Astrocyte of the cerebellum (primary cell): ENCODE measurements at regions of chr11 and their contacts with region 1.

Region 1: GRCh38 chr11:63592975-63593395 is 21.2 kb downstream of the PLAAT3 start:
- DNase-seq: no peak
- H3K4me3 ChIP-seq: no peak overlapping the region
- CTCF ChIP-seq: peak; percentile 71

Region 2: DNA sequence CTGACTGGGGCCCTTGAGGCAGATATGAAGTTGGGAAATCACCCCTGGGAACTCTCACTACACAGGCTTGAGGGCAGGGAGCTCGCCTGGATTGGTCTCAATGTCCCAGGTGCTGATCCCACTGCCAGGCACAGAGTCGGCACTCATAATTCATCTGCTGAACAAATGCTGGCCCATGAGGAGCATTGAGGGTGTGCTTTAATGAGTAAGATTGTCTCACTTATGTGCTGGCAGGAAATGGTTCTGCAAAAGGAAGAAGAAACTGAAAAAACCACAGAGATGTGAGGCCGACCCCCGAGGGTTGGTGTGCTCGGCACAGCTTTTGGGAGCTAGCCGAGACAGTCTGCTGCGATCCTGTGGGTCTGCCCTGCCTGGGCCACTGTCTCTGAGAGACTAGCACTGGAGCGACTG is 39.2 kb before region 1 on chr11:
- in situ Hi-C with region 1: loop called (anchors 5 kb)
- DNase-seq: no peak
- H3K4me3 ChIP-seq: no peak overlapping the region
- CTCF ChIP-seq: no peak

Region 3: DNA sequence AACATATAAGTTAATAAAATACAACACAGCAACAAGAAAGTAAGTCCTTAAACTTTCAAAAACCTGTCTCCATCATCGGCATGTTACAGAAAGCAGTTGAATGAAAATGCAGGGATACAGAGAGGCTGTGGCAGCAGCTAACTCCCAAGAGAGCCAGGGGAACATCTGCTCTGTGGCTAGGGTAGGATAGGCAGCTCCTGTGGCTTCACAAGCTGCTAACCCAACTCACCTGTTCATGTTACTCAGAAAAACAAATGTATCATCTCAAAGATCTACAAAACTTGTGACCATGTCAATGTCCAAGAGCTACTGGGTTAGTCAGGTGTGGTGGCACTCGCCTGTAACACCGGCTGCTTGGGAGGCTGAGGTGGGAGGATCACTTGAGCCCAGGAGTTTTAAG is 36.4 kb after region 1 on chr11:
- in situ Hi-C with region 1: no loop called
- DNase-seq: no peak
- H3K4me3 ChIP-seq: no peak overlapping the region
- CTCF ChIP-seq: no peak

Region 4: DNA sequence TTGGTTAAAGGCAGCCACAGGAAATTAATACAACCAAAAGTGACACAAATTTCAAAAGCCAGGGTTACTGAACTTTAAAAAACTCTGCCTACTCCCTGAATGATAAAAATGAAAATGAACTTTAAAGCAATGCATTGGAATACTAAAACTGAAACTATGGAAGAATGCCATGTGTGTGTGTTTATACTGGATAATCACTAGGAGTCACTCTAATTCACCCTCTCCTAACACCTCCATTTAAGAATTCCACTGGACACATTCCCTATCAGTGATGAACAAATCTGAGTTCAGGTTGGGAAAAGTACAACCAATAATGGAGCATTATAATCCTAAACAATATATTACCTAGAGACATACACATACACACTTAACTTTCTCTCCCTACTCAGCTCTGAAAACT is 48.7 kb after region 1 on chr11:
- in situ Hi-C with region 1: loop called (anchors 5 kb)
- DNase-seq: peak; percentile 11
- H3K4me3 ChIP-seq: no peak overlapping the region
- CTCF ChIP-seq: peak; percentile 13